Astrocyte of the cerebellum (primary cell): ENCODE measurements at regions of chr16 and their contacts with region 1.

Region 1: DNA sequence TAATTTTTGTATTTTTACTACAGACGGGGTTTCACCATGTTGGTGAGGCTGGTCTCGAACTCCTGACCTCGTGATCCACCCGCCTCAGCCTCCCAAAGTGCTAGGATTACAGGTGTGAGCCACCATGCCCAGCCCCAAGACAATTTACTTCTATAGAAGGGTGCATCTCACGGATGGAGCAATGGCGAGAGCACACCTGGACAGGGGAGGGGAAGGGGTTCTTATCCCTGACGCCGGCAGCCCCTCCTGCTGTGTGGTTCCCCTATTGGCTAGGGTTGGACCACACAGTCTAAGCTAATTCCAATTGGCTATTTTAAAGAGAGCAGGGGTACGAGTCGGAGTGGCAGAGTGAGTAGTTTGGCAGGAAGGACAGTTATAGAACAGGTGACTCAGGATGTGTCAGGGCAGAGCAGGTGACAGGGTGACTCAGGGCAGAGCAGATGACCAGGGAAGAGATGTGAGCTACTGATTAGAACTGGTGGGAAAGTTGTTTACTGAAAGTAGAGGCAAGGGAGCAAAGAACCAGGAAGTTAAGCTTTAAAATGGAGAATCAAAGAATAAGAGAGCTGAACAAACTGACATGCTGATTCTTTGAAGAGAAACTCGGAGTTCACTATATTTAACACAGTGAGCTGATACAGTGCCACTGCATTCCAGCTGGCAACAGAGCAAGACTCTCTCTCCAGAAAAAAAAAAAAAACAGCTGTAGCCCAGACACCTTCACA is 12.6 kb upstream of the UBE2I start:
- DNase-seq: no peak
- H3K4me3 ChIP-seq: no peak overlapping the region
- CTCF ChIP-seq: no peak

Region 2: GRCh38 chr16:1019231-1020090 is 277.4 kb before region 1 on chr16:
- in situ Hi-C with region 1: no loop called
- DNase-seq: no peak
- H3K4me3 ChIP-seq: no peak overlapping the region
- CTCF ChIP-seq: no peak

Region 3: DNA sequence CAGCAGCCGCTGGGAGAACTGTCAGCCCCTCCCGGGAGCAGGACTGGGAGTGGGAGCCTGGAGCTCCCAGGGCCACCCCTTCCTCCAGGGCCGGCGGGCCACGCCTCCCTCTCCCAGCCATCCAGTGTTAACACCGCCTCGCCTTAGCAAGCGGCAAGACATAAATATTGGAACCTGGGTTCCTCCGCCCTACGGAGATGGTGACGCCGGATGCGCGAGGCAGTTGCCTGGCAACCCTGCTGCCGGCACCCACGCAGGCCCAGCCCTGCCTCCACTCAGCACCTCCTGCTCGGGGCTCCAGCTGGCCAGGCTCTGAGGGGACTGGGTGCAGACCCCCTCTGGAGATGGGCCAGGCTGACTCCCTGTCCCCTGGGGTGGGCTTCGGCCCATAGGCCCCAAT is 171.4 kb before region 1 on chr16:
- in situ Hi-C with region 1: loop called (anchors 25 kb)
- DNase-seq: no peak
- H3K4me3 ChIP-seq: no peak overlapping the region
- CTCF ChIP-seq: no peak

Region 4: DNA sequence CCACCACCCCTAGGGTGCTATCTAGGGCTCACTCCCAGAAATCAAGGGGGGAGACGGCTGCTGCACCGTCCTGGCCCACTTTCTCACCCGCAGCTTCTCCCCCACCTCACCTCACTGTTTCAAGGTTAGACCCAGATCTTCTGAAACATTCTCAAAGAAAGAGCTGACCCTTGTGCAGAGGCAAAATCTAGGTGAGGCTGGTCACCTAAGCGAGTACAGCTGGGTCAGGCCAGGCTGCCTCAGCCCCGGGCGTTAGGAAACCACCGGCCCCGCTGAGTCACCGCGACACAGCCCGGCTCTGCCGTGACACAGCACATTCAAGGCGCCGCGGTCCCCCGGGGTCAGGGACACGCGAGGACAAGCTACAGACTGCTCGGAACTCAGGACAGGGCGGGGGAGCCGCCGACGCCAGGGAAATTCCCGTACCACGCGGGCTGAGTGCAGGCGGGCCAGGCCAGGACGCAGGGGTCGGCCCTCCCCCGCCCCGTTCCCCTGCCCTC is 82.0 kb after region 1 on chr16:
- in situ Hi-C with region 1: loop called (anchors 25 kb)
- DNase-seq: no peak
- H3K4me3 ChIP-seq: peak overlapping the region; percentile 47
- CTCF ChIP-seq: no peak